Cardiac septum (tissue), 1 donor: ENCODE measurements at regions of chr2 and their contacts with region 1.

Region 1: GRCh38 chr2:151289369-151290088 is at the start of gene NMI:
- DNase-seq: peak; percentile 91
- total RNA-seq, gene NMI: 3.1 TPM

Region 2: DNA sequence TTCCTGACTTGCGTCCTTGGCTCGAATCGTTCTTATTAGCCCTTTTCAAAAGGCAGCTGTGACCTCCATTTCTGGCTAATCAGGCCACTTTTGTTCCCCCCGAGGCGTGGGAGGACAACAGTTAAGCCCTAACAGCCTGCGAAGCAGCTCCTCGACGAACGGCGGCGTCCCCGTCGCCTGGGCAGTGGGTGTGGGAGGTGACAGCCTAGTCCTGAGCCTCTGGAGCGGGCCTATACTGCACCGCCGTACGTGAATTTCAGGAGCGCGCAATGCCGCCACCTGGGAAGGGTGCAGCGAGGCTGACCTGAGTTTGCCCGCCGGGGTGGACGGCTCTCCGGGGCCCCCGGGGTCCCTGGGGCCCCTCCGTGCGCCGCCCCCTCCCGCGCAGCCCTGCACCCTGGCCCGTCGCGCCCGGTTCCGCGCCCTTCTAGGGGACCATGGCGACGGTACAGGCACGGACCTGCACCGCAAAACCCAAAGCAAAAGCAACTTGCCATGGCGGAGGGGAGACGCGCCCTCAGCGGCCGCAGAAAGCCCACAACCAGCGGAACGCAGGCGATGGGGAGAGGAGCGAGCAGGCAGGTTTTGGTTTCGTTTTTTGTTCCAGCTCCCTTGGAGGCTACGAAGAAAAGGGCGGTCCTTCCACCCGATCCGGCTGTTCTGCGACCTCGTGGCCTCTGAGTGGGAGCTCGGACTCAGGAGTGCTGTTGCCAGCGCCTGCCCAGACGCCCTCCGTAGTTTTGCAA is 28.1 kb before region 1 on chr2 and contains the start of gene RBM43:
- intact Hi-C with region 1: loop called (anchors 1 kb)
- DNase-seq: peak; percentile 93
- total RNA-seq, gene RBM43: 1.5 TPM

Region 3: GRCh38 chr2:151409601-151410484 is 120.3 kb after region 1 on chr2 and contains the start of gene RIF1:
- intact Hi-C with region 1: loop called (anchors 2 kb)
- DNase-seq: peak; percentile 94
- total RNA-seq, gene RIF1: 16.1 TPM